Tibial artery (tissue), 4 donors: ENCODE measurements at regions of chr1 and their contacts with region 1.

Region 1: DNA sequence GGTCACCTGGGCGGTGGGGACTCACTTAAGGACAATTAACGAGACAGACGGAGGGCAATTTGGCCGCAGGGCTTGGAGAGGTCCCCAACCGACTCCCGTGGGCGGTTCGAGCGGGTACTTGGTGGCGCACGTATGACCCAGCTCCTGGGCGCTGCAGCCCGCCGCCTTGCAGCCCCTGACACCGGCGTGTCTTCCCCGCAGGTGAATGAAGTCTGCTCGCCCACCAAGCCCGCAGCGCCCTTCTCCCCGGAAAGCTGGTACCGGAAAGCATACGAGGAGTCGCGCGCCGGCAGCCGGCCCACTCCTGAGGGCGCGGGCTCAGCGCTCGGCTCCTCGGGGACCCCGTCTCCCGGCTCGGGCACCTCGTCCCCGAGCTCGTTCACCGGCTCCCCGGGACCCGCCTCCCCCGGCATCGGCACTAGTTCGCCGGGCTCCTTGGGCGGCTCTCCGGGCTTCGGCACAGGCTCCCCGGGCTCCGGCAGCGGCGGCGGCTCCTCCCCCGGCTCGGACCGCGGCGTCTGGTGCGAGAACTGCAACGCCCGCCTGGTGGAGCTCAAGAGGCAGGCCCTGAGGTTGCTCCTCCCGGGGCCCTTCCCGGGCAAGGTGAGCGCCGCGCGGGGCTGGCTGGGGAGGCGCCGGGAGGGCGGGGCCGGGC is 1.4 kb downstream of the KIF26B start:
- DNase-seq: peak; percentile 62 to 83
- H3K4me3 ChIP-seq: peak overlapping the region; percentile 47 to 57
- H3K27ac ChIP-seq: no peak overlapping the region
- H3K4me1 ChIP-seq: peaks cover 7 to 44% (median 40%) of the 10 kb centered on the region in 4 donors
- H3K27me3 ChIP-seq: peaks cover 0 to 58% of the 10 kb centered on the region in 2 donors
- CTCF ChIP-seq: peak; percentile 52 to 56

Region 2: GRCh38 chr1:244874974-244875579 is 281.1 kb before region 1 on chr1:
- intact Hi-C with region 1: loop called (anchors 10 kb)
- DNase-seq: no peak
- H3K4me3 ChIP-seq: no peak overlapping the region
- H3K27ac ChIP-seq: no peak overlapping the region
- H3K4me1 ChIP-seq: no peaks in the 10 kb centered on the region
- H3K27me3 ChIP-seq: no peaks in the 10 kb centered on the region
- CTCF ChIP-seq: no peak

Region 3: GRCh38 chr1:246002725-246003441 is 846.7 kb after region 1 on chr1:
- intact Hi-C with region 1: loop called (anchors 10 kb)
- DNase-seq: peak; percentile 81 to 86
- H3K4me3 ChIP-seq: no peak overlapping the region
- H3K27ac ChIP-seq: no peak overlapping the region
- H3K4me1 ChIP-seq: peaks cover 0 to 3% (median 0%) of the 10 kb centered on the region in 4 donors
- H3K27me3 ChIP-seq: no peaks in the 10 kb centered on the region
- CTCF ChIP-seq: peak; percentile 54 to 55

Region 4: DNA sequence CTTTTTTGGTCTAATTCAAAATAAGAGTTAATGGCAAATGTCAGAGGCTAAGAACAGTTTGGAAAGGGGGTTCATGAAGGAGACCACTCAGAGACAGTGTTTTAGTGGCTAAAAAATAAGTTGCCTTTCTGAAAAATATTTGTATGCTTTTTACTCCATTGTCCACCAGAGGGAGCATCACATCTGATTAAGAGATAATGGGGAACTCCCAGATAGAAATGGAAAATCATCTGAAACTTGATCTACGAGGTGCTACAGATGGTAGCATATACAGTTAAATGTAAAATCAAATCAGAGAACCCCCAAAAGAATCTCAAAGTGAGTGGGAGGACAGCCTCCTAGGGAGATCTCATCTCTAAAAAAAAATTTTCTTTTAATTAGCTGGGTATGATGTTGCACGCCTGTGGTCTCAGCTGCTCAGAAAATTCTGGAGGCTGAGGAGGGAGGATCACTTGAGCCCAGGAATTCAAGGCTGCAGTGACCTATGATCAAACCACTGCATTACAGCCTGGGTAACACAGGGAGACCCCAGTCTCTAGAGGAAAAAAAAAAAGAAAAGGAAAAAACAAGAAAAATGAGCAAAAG is 1341.2 kb after region 1 on chr1:
- intact Hi-C with region 1: loop called (anchors 10 kb)
- DNase-seq: no peak
- H3K4me3 ChIP-seq: no peak overlapping the region
- H3K27ac ChIP-seq: no peak overlapping the region
- H3K4me1 ChIP-seq: no peaks in the 10 kb centered on the region
- H3K27me3 ChIP-seq: no peaks in the 10 kb centered on the region
- CTCF ChIP-seq: peak; percentile 62 to 77